PC-3 (cell line): ENCODE measurements at regions of chr17 and their contacts with region 1.

Region 1: DNA sequence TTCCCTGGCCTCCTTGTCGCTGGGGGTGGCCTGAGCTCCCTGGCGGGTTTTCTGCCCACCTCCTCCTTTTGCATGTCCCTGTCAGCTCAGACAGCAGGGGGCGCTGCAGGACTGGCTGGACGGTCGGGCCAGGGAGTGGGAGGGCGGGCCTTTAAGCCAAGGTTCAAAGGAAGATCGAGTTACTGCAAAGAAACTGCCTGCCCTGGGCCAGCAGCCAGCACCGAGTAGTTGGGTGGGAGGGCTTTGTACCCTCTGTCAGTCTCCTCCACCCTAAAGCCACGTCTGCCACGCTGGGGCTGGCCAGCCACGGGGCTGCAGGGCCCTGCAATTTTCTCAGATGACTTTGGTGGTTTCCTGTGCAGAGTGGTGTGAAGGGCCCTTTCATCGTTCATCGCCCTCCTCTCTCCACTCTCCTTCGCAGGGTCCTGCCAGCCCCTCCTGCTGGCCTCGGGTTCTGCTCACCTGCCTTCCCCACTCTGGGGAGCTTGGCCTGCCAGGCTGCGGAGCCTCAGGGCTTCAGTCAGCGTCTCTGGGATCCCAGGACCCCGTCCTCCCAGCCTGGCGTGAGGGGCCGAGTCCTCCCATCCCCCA is 12.3 kb downstream of the GPR142 start:
- DNase-seq: peak; percentile 92
- ATAC-seq: peak; percentile 83
- H3K4me3 ChIP-seq: peak overlapping the region; percentile 49
- H3K27ac ChIP-seq: no peak overlapping the region
- H3K4me1 ChIP-seq: peaks cover 19% of the 10 kb centered on the region
- H3K27me3 ChIP-seq: peaks cover 22% of the 10 kb centered on the region
- CTCF ChIP-seq: peak; percentile 97

Region 2: DNA sequence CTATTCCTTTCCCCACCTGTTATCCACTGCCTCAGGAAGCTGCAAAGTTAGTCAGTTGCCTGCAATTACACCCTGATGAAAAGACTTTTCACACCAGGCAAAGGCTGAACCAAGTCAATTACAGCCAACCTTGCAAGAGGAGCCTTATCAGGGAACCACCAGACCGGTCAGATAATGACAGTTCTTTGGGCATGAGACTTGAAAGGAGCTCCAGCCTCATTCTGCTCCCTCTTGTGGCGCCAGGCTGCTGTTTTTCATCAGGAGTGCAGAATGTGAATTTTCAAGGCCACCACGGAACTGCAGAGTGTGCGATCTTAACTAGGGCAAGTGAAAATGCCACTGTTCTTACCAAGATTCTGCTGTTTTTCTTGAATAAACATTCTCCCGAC is 83.0 kb before region 1 on chr17:
- CTCF ChIA-PET with region 1: no interaction called
- POLR2A ChIA-PET with region 1: interaction called, 24 read pairs
- intact Hi-C with region 1: no loop called
- DNase-seq: peak; percentile 67
- ATAC-seq: peak; percentile 68
- H3K4me3 ChIP-seq: no peak overlapping the region
- H3K27ac ChIP-seq: no peak overlapping the region
- H3K4me1 ChIP-seq: peaks cover 21% of the 10 kb centered on the region
- H3K27me3 ChIP-seq: no peaks in the 10 kb centered on the region
- CTCF ChIP-seq: peak; percentile 83

Region 3: DNA sequence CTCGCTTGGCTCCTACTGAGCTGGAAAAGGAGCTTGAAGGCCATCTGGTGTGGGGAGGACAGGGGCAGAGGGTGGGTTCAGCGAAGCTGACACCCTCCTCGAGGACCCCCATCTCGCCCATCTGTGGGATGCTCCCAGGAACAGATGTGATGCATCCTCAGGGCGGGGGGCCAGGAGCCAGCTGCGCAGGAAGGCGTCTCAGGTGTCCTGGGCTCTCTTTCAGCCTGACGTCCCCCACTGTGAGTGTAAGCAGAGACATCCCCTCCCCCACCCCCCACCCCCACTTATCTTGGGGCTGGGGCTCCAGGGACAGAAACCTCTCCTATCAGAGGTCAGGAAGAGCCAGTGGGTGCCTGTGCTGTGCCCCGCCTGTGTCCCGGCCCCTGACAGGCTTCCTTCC is 37.4 kb before region 1 on chr17:
- CTCF ChIA-PET with region 1: no interaction called
- POLR2A ChIA-PET with region 1: no interaction called
- intact Hi-C with region 1: no loop called
- DNase-seq: no peak
- ATAC-seq: no peak
- H3K4me3 ChIP-seq: no peak overlapping the region
- H3K27ac ChIP-seq: no peak overlapping the region
- H3K4me1 ChIP-seq: peaks cover 5% of the 10 kb centered on the region; the same call in 1 of the 2 replicates
- H3K27me3 ChIP-seq: peaks cover 34% of the 10 kb centered on the region
- CTCF ChIP-seq: no peak

Region 4: GRCh38 chr17:74354123-74354522 is 25.5 kb before region 1 on chr17:
- CTCF ChIA-PET with region 1: no interaction called
- POLR2A ChIA-PET with region 1: no interaction called
- intact Hi-C with region 1: no loop called
- DNase-seq: peak; percentile 44
- ATAC-seq: peak; percentile 41
- H3K4me3 ChIP-seq: no peak overlapping the region
- H3K27ac ChIP-seq: no peak overlapping the region
- H3K4me1 ChIP-seq: no peaks in the 10 kb centered on the region
- H3K27me3 ChIP-seq: peaks cover 90% of the 10 kb centered on the region
- CTCF ChIP-seq: peak; percentile 81

Region 5: DNA sequence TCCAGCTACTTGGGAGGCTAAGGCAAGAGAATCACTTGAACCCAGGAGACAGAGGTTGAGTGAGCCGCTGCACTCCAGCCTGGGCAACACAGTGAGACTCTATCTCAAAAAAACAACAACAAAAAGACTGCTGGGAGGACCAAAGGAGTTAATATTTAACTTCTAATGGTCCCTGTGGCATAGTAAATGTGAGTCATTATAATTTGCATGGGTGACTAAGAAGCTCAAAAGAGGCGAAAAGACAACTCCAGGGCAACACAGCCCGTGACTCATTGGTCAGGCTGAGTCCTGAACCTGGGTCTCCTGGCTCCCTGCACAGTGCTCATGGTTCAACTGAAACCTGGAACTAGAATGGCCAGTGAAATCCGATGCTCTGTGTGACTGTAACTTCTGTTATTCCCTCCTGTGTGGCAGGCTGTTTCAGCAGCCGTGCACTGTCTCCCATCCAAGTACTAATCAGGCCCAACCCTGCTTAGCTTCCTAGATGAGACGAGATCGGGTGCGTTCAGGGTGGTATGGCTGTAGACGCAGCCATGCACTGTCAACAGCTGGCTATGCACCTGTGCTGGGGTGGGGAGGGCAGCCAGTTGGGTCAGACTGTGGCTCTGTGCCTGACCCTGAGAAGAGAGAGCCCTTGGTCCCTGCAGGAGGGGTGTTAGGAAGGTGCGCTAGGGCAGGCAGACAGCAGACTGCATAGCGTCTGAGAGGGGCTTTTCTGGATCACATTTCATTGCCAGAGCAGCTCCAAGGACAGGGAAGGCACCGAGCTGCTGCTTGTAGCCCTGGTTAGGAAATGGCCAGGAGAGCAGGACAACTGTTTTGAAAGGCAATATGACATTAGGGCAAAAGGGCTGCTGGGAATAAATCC is 37.8 kb after region 1 on chr17:
- CTCF ChIA-PET with region 1: interaction called, 11 read pairs
- POLR2A ChIA-PET with region 1: no interaction called
- intact Hi-C with region 1: no loop called
- DNase-seq: peak; percentile 98
- ATAC-seq: peak; percentile 96
- H3K4me3 ChIP-seq: peak overlapping the region; percentile 24; the same call in 1 of the 2 replicates
- H3K27ac ChIP-seq: peak overlapping the region; percentile 88
- H3K4me1 ChIP-seq: peaks cover 21% of the 10 kb centered on the region
- H3K27me3 ChIP-seq: no peaks in the 10 kb centered on the region
- CTCF ChIP-seq: no peak

Region 6: DNA sequence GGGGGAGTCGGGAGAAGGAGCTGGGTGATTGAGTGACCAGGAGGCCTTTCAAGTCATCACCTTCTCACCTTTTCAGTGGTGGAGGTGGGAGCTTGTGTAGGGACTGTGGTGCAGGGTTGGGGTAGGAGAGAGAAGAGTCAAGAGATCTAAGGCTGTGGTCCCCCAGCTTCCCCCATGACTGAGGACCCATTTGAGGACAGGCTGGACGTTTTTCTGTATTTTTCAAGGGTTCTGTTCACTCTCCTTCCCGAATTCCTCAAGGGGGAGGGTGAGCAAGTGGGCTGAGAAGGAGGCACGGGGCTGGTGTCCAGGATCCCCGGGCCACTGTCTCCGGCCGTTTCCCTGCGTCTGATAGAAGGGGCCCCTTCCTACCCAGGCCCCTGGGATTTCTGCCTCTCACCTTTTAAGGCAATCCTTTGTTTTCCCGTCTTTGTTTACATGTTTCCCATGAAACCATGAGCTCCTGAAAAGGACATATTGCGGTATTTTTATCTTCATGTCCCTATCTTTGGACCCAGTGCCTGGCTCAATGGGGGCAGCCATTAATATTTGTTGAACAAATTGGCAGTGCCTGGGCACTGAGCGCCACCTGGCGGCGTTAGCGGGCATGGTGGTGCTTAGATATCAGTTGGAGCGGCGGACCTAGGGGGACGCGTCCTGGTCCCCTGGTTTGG is 77.7 kb after region 1 on chr17:
- CTCF ChIA-PET with region 1: interaction called, 47 read pairs
- POLR2A ChIA-PET with region 1: interaction called, 4 read pairs
- intact Hi-C with region 1: loop called (anchors 1 kb)
- DNase-seq: peak; percentile 88
- ATAC-seq: peak; percentile 17; the same call in 1 of the 2 replicates
- H3K4me3 ChIP-seq: no peak overlapping the region
- H3K27ac ChIP-seq: no peak overlapping the region
- H3K4me1 ChIP-seq: peaks cover 14% of the 10 kb centered on the region
- H3K27me3 ChIP-seq: no peaks in the 10 kb centered on the region
- CTCF ChIP-seq: peak; percentile 99

Region 7: DNA sequence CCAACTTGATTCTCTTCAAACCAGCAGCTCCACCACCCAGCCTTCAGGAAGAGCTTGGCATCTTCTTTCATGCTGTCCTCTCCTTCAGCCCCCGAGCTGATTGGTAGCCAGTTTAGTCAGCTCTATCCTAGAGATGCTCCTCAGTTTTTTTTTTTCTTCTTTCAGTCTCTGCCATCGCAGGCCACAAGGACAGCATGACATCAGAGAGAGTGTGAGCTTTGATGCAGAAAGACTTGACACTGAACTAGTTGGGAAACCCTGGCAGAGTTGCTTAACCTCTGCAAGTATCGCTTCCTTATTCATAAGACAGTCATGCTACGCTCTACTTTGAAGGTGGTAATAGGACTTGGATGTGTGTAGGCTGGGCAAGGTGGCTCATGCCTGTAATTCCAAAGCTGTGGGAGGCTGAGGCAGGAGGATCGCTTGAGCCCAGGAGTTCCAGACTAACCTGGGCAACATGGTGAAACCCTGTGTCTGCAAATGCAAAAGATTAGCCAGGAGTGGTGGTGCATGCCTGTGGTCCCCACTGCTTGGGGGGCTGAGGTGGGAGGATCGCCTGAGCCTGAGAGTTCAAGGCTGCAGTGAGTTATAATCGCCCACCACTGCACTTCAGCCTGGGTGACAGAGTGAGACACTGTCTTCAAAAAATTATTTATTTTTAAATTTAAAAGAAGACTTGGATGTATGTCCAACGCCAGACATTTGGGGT is 149.1 kb after region 1 on chr17:
- CTCF ChIA-PET with region 1: interaction called, 6 read pairs
- POLR2A ChIA-PET with region 1: no interaction called
- intact Hi-C with region 1: loop called (anchors 1 kb)
- DNase-seq: no peak
- ATAC-seq: no peak
- H3K4me3 ChIP-seq: no peak overlapping the region
- H3K27ac ChIP-seq: no peak overlapping the region
- H3K4me1 ChIP-seq: no peaks in the 10 kb centered on the region
- H3K27me3 ChIP-seq: peaks cover 78% of the 10 kb centered on the region
- CTCF ChIP-seq: no peak